Posterior cingulate gyrus (tissue), 11 donors: ENCODE measurements at regions of chr14 and their contacts with region 1.

Region 1: DNA sequence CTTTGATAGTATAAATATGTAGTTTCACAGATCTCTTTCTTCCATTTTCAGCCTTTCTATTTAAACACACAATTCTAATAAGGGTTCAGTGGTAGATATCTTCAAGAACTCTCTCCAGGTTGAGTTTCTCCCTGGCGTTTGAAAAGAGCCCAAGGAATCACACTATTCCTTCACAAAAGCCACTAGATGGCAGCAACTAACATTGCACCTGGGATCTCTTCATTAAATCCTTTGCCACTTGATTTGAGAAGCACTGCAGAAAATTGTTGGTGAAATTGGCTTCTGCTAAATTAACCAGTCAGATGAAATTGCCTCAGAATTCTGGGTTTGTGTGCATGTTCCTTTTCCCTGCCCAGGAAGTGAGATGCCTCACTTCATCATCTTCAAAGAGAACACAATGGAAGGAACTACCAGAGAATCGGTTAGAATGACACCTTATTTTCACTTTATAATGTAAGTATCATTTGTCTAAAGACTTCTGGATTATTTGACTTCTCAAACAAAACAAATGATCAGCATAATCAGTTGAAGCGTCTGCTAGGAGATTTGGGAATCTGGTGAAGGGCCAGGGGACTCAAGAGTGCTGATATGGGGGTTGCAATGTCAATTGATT is 6.8 kb downstream of the CCDC198 start:
- DNase-seq: no peak

Region 2: GRCh38 chr14:57865403-57866198 is 378.7 kb after region 1 on chr14 and contains the start of gene SLC35F4:
- intact Hi-C with region 1: loop called (anchors 10 kb)
- DNase-seq: peak in 7 of 10 donors; percentile 9 to 87 (median 13)

Region 3: DNA sequence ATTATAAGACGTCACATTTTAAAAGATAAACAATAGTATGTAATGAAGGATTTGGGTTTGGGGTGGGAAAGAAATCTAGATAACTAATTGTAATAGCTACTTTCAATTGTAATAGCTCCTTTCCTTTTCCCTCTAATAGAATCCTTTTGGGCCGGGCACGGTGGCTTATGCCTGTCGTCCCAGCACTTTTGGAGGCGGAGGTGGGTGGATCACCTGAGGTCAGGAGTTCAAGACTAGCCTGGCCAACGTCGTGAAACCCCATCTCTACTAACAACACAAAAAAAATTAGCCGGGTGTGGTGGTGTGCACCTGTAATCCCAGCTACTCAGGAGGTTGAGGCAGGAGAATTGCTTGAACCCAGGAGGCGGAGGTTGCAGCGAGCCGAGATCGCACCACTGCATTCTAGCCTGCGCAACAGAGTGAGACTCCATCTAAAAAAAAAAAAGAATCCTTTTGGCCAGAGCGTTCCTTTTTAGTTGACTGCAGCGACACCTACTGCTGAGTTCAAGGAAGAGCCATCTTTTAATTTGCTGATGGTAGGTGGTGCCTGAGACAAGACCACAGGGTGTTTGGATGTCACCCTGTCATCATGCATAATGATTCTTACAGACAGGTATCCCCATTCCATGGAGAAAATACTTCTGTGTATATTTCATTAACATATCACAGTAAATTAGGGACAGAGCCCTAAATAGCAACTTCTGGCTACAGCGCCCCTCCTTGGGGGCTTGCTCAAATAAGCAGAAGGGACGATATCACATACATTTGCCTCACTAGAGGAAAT is 585.6 kb after region 1 on chr14:
- intact Hi-C with region 1: loop called (anchors 2 kb)
- DNase-seq: peak in 6 of 10 donors; percentile 23 to 82 (median 45)